ENCODE measurements at regions of chr3 and their contacts with region 1.

Region 1: DNA sequence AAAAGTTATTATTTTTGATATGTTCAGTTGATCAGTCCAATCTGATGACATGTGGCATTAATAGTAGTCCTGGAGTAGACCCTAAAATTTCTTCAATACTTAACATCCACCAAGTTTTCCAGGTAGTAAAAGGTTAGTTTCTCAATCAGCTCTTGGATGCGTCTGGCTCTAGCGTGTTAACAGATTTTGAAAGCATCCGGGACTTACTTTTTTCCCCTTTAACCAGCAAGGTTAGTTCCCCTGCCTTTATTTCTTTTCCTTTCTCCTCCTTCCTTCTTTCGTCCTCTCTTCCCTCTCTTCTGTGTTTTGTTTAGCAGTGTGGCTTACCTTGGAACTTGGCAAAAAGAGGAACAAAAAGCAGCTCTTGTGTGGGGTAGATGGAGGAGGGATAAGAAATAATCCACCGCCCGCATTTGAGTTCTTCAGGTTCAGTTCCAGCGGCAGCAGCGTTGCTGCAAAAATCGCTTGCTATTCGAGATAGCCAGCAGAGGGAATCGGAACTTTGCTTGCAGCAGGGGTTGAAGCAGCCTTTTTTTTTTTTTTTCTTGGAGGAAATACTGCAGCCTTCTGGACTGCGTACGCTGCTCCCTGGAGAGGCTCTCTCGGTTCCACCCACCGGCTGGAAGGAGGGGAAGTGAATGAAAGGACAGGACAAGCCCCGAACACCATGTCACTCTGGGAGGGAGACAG is at the start of gene RBMS3:
- DNase-seq: peak in 5 of 9 donors; percentile 5 to 24 (median 16)
- ATAC-seq: peak; percentile 26
- H3K4me3 ChIP-seq: peak within 1 kb of the TSS; percentile 54
- H3K4me3 Mint-ChIP-seq: peak within 1 kb of the TSS; percentile 79 to 94 (median 86)
- H3K27ac ChIP-seq: no peak within 1 kb of the TSS
- H3K27ac Mint-ChIP-seq: peak within 1 kb of the TSS in 7 of 9 donors; percentile 20 to 81 (median 68)
- H3K4me1 ChIP-seq: no peaks in the 10 kb centered on the region
- H3K4me1 Mint-ChIP-seq: peaks cover 17 to 38% (median 31%) of the 10 kb centered on the region in 7 donors
- H3K27me3 ChIP-seq: no peaks in the 10 kb centered on the region
- H3K27me3 Mint-ChIP-seq: peaks cover 14 to 31% (median 20%) of the 10 kb centered on the region in 5 donors
- total RNA-seq, gene RBMS3: 0.16 to 4.9 (median 0.89) TPM

Region 2: GRCh38 chr3:28916713-28917499 is 363.6 kb before region 1 on chr3:
- CTCF ChIA-PET with region 1: no interaction called
- POLR2A ChIA-PET with region 1: no interaction called
- intact Hi-C with region 1: loop called in 1 of 2 experiments (anchors 5 kb)
- DNase-seq: peak in 4 of 9 donors; percentile 0 to 23 (median 7)
- ATAC-seq: no peak
- H3K4me3 ChIP-seq: no peak overlapping the region
- H3K4me3 Mint-ChIP-seq: peak overlapping the region in 2 of 10 donors; percentile 26 to 43
- H3K27ac ChIP-seq: no peak overlapping the region
- H3K27ac Mint-ChIP-seq: no peak overlapping the region
- H3K4me1 ChIP-seq: no peaks in the 10 kb centered on the region
- H3K4me1 Mint-ChIP-seq: peaks cover 0 to 18% (median 4%) of the 10 kb centered on the region in 7 donors
- H3K27me3 ChIP-seq: no peaks in the 10 kb centered on the region
- H3K27me3 Mint-ChIP-seq: peaks cover 0 to 14% (median 0%) of the 10 kb centered on the region in 5 donors

Region 3: DNA sequence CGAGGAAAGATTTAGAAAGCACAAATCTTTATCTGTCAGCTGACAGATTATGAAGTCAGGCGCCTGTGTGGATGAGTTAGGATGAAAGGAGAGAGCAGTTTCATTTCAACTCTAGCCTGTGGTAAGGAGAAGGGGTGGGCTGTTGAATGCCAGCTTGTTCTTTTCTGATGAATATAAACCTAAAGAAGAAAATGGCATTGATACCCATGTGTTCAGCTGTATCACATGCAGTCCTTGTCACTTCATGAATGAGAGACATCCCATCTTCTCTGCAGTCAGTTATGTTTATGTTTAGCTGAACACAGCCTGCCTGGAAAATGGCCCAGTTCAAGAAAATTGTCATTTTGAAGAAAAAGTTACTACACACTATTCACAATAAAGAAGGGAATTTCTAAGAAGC is 345.4 kb before region 1 on chr3:
- CTCF ChIA-PET with region 1: no interaction called
- POLR2A ChIA-PET with region 1: no interaction called
- intact Hi-C with region 1: loop called in 1 of 2 experiments (anchors 5 kb)
- DNase-seq: no peak
- ATAC-seq: no peak
- H3K4me3 ChIP-seq: no peak overlapping the region
- H3K4me3 Mint-ChIP-seq: peak overlapping the region in 1 of 10 donors; percentile 78
- H3K27ac ChIP-seq: no peak overlapping the region
- H3K27ac Mint-ChIP-seq: peak overlapping the region in 1 of 9 donors; percentile 84
- H3K4me1 ChIP-seq: no peaks in the 10 kb centered on the region
- H3K4me1 Mint-ChIP-seq: peaks cover 0 to 40% (median 0%) of the 10 kb centered on the region in 7 donors
- H3K27me3 ChIP-seq: no peaks in the 10 kb centered on the region
- H3K27me3 Mint-ChIP-seq: no peaks in the 10 kb centered on the region

Region 4: DNA sequence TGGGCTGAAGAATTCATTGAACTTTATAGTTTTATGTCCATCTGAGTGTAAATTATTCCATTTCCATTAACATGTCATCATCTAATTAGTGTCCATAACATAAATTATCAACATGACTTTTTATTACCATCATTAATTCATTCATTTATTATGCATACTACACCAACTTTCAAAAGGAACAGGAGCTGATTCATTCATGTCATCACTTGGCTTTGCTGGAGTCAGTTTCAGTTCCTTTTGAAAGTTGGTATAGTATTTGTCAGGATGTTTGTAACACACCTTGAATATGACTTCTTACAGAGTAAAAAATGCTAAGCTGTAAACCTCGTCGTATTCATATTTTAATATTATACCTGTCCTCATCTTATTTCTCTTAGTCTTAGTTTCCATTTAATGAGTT is 297.6 kb before region 1 on chr3:
- CTCF ChIA-PET with region 1: no interaction called
- POLR2A ChIA-PET with region 1: no interaction called
- intact Hi-C with region 1: no loop called
- DNase-seq: no peak
- ATAC-seq: no peak
- H3K4me3 ChIP-seq: no peak overlapping the region
- H3K4me3 Mint-ChIP-seq: no peak overlapping the region
- H3K27ac ChIP-seq: no peak overlapping the region
- H3K27ac Mint-ChIP-seq: no peak overlapping the region
- H3K4me1 ChIP-seq: no peaks in the 10 kb centered on the region
- H3K4me1 Mint-ChIP-seq: no peaks in the 10 kb centered on the region
- H3K27me3 ChIP-seq: no peaks in the 10 kb centered on the region
- H3K27me3 Mint-ChIP-seq: peaks cover 0 to 7% (median 0%) of the 10 kb centered on the region in 5 donors

Region 5: DNA sequence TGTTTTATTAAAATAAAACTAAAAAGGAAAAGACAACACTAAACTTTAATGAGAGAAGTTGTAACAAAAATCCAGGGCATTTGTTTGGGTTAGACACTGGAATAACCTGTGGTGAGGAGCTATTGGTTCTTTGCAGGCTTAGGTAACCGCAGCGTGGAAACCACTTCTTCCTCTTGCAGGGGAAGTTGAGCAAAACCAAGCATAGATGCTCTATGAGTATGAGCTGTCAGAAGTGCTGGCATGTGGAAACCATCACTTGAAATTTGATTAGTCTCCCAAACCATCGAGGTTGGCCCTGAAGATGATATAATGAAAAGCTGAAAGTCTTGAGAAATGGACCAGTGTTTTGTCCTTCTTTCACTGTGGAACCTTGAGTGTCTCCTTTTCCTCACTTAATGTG is 126.7 kb before region 1 on chr3:
- CTCF ChIA-PET with region 1: no interaction called
- POLR2A ChIA-PET with region 1: no interaction called
- intact Hi-C with region 1: loop called in 1 of 2 experiments (anchors 5 kb)
- DNase-seq: peak in 5 of 9 donors; percentile 13 to 41 (median 29)
- ATAC-seq: no peak
- H3K4me3 ChIP-seq: no peak overlapping the region
- H3K4me3 Mint-ChIP-seq: peak overlapping the region in 4 of 10 donors; percentile 5 to 29 (median 12)
- H3K27ac ChIP-seq: no peak overlapping the region
- H3K27ac Mint-ChIP-seq: peak overlapping the region in 1 of 9 donors; percentile 13
- H3K4me1 ChIP-seq: peaks cover 0 to 8% of the 10 kb centered on the region in 2 donors
- H3K4me1 Mint-ChIP-seq: peaks cover 0 to 19% (median 11%) of the 10 kb centered on the region in 7 donors
- H3K27me3 ChIP-seq: no peaks in the 10 kb centered on the region
- H3K27me3 Mint-ChIP-seq: peaks cover 0 to 31% (median 0%) of the 10 kb centered on the region in 5 donors

Region 6: GRCh38 chr3:29319262-29319661 is 38.7 kb after region 1 on chr3:
- CTCF ChIA-PET with region 1: no interaction called
- POLR2A ChIA-PET with region 1: no interaction called
- intact Hi-C with region 1: no loop called
- DNase-seq: no peak
- ATAC-seq: no peak
- H3K4me3 ChIP-seq: no peak overlapping the region
- H3K4me3 Mint-ChIP-seq: no peak overlapping the region
- H3K27ac ChIP-seq: no peak overlapping the region
- H3K27ac Mint-ChIP-seq: no peak overlapping the region
- H3K4me1 ChIP-seq: no peaks in the 10 kb centered on the region
- H3K4me1 Mint-ChIP-seq: peaks cover 0 to 3% (median 0%) of the 10 kb centered on the region in 7 donors
- H3K27me3 ChIP-seq: no peaks in the 10 kb centered on the region
- H3K27me3 Mint-ChIP-seq: peaks cover 0 to 9% (median 0%) of the 10 kb centered on the region in 5 donors

Region 7: GRCh38 chr3:29353807-29354206 is 73.3 kb after region 1 on chr3:
- CTCF ChIA-PET with region 1: no interaction called
- POLR2A ChIA-PET with region 1: no interaction called
- intact Hi-C with region 1: loop called in 1 of 2 experiments (anchors 10 kb)
- DNase-seq: no peak
- ATAC-seq: no peak
- H3K4me3 ChIP-seq: no peak overlapping the region
- H3K4me3 Mint-ChIP-seq: peak overlapping the region in 1 of 10 donors; percentile 59
- H3K27ac ChIP-seq: no peak overlapping the region
- H3K27ac Mint-ChIP-seq: no peak overlapping the region
- H3K4me1 ChIP-seq: no peaks in the 10 kb centered on the region
- H3K4me1 Mint-ChIP-seq: peaks cover 0 to 18% (median 0%) of the 10 kb centered on the region in 7 donors
- H3K27me3 ChIP-seq: no peaks in the 10 kb centered on the region
- H3K27me3 Mint-ChIP-seq: no peaks in the 10 kb centered on the region

Region 8: GRCh38 chr3:29430558-29430971 is 150.0 kb after region 1 on chr3:
- CTCF ChIA-PET with region 1: no interaction called
- POLR2A ChIA-PET with region 1: no interaction called
- intact Hi-C with region 1: no loop called
- DNase-seq: no peak
- ATAC-seq: no peak
- H3K4me3 ChIP-seq: no peak overlapping the region
- H3K4me3 Mint-ChIP-seq: no peak overlapping the region
- H3K27ac ChIP-seq: no peak overlapping the region
- H3K27ac Mint-ChIP-seq: no peak overlapping the region
- H3K4me1 ChIP-seq: no peaks in the 10 kb centered on the region
- H3K4me1 Mint-ChIP-seq: no peaks in the 10 kb centered on the region
- H3K27me3 ChIP-seq: no peaks in the 10 kb centered on the region
- H3K27me3 Mint-ChIP-seq: no peaks in the 10 kb centered on the region